ENCODE measurements at regions of chr14 and their contacts with region 1.

Region 1: DNA sequence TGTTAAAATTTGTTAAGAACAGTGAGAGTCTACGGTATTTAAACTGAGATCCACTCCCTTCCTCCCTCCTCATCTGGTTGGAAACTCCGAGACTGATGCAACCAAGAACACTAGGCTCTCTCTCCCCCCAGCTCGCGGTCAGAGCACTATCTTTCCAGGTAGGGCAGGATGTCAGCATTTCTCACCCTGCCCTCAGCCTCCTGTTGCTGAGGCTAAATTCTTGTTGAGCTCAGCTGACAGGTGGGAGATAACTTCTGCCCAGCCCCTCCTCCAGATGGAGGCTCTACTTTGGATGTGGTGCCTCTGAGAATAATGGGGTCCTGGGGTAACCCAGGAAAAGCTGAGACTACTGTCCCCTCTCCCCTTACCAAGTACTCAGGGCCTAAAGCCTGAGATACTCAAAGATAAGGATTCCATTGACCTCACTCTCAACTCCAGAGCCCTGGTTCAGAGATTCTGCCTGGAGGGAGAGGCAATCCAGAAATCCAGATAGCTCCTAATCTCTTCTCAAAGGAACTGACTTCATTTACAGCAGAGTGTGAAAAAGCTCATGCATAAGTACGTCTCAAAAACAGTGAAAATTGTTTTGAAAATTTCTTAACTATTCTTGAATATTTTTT is 110.1 kb downstream of the EML5 start:
- DNase-seq: peak; percentile 43
- ATAC-seq: peak; percentile 96
- H3K4me3 Mint-ChIP-seq: no peak overlapping the region
- H3K27ac Mint-ChIP-seq: 0 out of 2 replicates have a peak overlapping the region, but pooled peaks have one; percentile 14
- H3K4me1 Mint-ChIP-seq: peaks cover 8% of the 10 kb centered on the region
- H3K27me3 Mint-ChIP-seq: no peaks in the 10 kb centered on the region
- CTCF ChIP-seq: no peak

Region 2: DNA sequence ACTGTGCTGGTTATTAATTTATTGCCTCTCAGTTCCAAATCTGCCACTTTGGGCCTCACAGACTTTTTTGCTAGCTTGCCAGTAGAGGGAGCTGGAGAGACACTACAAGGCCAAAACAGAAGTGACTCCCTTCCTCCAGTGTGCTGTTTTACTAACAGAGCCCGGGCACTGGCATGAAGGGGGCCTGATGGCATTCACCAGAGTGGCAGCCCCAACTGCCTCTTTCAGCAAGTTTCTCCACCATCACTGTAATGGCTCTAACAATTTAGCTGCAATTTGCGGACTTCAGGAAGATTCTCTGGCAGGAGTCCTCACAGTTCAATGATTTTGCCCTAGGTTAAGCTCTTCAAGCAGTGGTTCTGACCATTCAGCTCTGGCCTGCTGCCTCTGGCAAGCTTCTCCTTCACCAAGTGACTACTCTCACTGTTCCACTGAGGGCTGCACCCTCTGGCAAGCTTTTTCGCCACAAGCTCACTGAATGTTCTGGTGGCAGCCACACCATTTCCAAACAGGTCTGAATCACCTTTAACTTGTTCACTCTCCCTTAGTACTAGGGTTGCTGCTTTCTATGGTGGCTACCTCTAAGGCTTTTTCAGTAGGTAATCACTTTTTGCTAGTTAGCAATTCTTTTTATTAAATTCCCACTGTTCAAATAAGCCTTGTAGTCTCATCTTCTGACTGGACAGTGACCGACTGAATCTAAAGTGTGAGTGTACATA is 14.9 kb before region 1 on chr14:
- CTCF ChIA-PET with region 1: interaction called, 18 read pairs
- POLR2A ChIA-PET with region 1: no interaction called
- DNase-seq: peak; percentile 38
- ATAC-seq: peak; percentile 95
- H3K4me3 Mint-ChIP-seq: no peak overlapping the region
- H3K27ac Mint-ChIP-seq: no peak overlapping the region
- H3K4me1 Mint-ChIP-seq: no peaks in the 10 kb centered on the region
- H3K27me3 Mint-ChIP-seq: peaks cover 9% of the 10 kb centered on the region
- CTCF ChIP-seq: peak; percentile 69; the same call in 1 of the 2 replicates